Ascending aorta (tissue), 2 donors: ENCODE measurements at regions of chr16 and their contacts with region 1.

Region 1: DNA sequence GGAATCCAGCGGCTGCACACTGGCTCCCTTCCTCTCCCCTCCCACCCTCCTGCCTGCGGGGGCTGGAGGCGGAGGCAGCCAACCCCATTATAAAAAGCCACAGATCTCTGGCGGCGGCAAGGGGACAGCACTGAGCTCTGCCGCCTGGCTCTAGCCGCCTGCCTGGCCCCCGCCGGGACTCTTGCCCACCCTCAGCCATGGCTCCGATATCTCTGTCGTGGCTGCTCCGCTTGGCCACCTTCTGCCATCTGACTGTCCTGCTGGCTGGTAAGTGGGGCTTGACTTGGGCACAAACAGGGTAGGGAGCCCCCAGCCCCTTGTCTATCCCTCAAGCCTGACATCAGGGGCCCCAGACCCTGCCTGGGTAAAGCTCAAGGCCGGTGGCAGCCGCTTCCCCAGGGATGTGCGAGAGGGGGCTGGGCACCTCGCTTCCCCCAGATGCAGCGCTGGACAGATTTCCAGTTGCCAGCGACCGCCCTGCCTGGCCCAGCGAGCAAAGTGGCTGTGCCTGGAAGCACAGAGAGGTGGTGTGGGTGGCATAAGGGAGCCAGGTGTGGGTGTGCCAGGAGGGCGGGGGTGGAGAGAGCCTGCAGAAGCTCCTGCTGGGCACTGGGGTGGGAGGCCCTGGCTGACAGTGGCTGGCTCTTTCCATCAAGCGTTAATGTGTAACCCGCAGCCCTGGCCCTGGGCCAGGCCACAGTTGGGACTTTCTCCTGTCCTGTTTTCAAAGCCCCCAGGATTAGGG is at the start of gene CX3CL1:
- DNase-seq: peak in 1 of 2 donors; percentile 95
- H3K4me3 ChIP-seq: peak within 1 kb of the TSS; percentile 75 to 76
- H3K27ac ChIP-seq: peak within 1 kb of the TSS; percentile 94 to 99
- H3K4me1 ChIP-seq: peaks cover 16 to 37% of the 10 kb centered on the region in 2 donors
- H3K27me3 ChIP-seq: no peaks in the 10 kb centered on the region
- CTCF ChIP-seq: peak; percentile 20 to 56 (median 48)
- total RNA-seq, gene CX3CL1: 251 TPM

Region 2: DNA sequence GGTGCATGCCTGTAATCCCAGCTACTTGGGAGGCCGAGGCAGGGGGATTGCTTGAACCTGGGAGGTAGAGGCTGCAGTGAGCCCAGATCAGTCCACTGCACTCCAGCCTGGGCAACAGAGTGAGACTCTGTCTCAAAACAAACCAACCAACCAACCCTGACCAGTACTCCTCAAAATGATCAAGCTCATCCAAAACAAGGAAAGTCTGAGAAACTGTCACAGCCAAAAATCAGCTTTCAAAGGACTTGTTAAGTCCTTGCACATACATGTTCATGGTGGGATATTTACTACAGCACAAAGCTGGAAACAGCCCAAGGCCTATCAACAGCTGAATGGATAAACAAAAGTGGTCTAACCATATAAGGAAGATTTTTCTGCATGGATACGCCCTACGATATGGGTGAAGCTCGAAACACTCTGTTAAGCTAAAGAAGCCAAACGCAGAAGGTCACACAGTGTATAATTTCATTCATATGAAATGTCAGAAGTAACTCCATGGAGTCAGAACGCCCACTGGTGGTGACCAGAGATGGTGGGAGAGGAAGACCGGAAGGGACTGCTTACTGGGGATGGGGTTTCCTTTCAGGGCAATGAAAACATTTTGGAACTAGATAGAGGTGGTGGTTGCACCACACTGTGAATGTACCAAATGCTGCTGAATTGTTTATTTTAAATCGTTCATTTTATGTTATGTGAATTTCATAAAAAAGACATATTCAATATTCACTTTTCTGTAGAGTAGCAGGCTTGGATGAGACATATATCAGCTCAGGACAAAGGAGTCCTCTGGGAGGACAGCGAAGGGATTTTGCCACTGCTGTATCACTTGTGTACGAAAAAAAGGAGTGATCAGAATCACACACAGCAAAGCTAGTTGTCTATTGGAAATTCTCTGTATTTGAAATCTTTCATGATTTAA is 49.7 kb after region 1 on chr16:
- intact Hi-C with region 1: loop called (anchors 2 kb)
- DNase-seq: peak in 1 of 2 donors; percentile 83
- H3K4me3 ChIP-seq: no peak overlapping the region
- H3K27ac ChIP-seq: peak overlapping the region; percentile 28 to 58
- H3K4me1 ChIP-seq: peaks cover 0 to 24% of the 10 kb centered on the region in 2 donors
- H3K27me3 ChIP-seq: no peaks in the 10 kb centered on the region
- CTCF ChIP-seq: peak; percentile 71 to 87 (median 79)